ENCODE measurements at regions of chr1 and their contacts with region 1.

Region 1: GRCh38 chr1:40691538-40692428 is at the start of gene NFYC:
- DNase-seq: peak; percentile 87 to 98
- ATAC-seq: peak; percentile 94 to 95
- H3K4me3 ChIP-seq: peak within 1 kb of the TSS; percentile 97
- H3K27ac ChIP-seq: peak within 1 kb of the TSS; percentile 99 to 100
- H3K4me1 ChIP-seq: peaks cover 18% of the 10 kb centered on the region
- CTCF ChIP-seq: no peak
- EP300 ChIP-seq: no peak
- POLR2A ChIP-seq: peak; percentile 62
- RAD21 ChIP-seq: no peak
- polyA plus RNA-seq, gene NFYC: 37.8 and 43.4 TPM in 2 replicates

Region 2: DNA sequence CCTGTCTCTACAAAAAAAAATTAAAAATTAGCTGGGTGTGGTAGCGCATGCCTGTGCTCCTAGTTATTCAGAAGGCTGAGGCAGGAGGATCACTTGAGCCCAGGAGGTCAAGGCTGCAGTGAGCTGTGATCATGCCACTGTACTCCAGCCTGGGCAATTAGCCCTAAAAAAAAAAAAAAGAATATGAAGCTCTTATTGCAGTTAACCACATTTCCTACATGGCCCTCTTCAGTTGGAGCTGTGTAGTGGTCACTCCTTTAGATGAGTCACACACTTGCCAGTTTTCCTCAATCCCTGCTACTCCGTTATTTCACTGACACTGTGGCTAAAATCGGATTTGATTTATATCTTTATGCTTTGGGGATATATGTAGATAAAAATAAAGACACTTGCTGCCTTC is 11.5 kb after region 1 on chr1:
- CTCF ChIA-PET with region 1: interaction called, 4 read pairs
- POLR2A ChIA-PET with region 1: interaction called, 19 read pairs
- DNase-seq: no peak
- ATAC-seq: peak; percentile 63 to 70; a peak in 4 of 6 replicates
- H3K4me3 ChIP-seq: no peak overlapping the region
- H3K27ac ChIP-seq: peak overlapping the region in 1 of 2 experiments; percentile 37; a peak in 1 of 6 replicates
- H3K4me1 ChIP-seq: peaks cover 26% of the 10 kb centered on the region
- CTCF ChIP-seq: no peak
- EP300 ChIP-seq: no peak
- POLR2A ChIP-seq: no peak
- RAD21 ChIP-seq: no peak

Region 3: DNA sequence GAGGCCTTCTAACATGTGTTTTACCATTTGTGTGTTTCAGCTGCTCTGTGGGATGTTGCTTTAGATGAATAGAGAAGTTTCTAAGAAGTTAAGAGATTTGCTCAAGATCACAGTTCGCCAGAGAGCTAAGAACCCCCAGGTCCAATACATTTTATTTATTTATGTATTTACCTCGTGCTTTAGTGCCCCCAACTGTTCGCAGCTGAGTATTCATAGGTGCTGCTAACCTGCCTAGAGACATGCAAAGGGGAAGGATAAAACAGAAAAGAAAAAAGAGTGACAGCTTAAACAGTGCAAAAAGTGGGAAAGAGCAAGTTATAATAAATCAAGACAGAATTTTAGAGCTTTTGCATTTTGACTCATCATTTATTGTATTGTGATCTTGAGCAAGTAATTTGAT is 30.9 kb after region 1 on chr1:
- CTCF ChIA-PET with region 1: no interaction called
- POLR2A ChIA-PET with region 1: interaction called, 11 read pairs
- DNase-seq: no peak
- ATAC-seq: no peak
- H3K4me3 ChIP-seq: no peak overlapping the region
- H3K27ac ChIP-seq: no peak overlapping the region
- H3K4me1 ChIP-seq: 0 out of 3 replicates have a peak, but pooled peaks cover 4% of the 10 kb centered on the region
- CTCF ChIP-seq: no peak
- EP300 ChIP-seq: no peak
- POLR2A ChIP-seq: no peak
- RAD21 ChIP-seq: no peak